CD4-positive, alpha-beta memory T cell (primary cell): ENCODE measurements at regions of chr19 and their contacts with region 1.

Region 1: GRCh38 chr19:18588611-18589379 is at the start of gene REX1BD:
- DNase-seq: peak; percentile 86 to 95 (median 87)
- H3K4me3 ChIP-seq: peak within 1 kb of the TSS; percentile 47 to 79
- H3K4me3 Mint-ChIP-seq: peak within 1 kb of the TSS; percentile 82 to 93 (median 89)
- H3K27ac ChIP-seq: peak within 1 kb of the TSS; percentile 67
- H3K27ac Mint-ChIP-seq: peak within 1 kb of the TSS; percentile 83 to 96 (median 92)
- H3K4me1 ChIP-seq: peaks cover 36% of the 10 kb centered on the region
- H3K4me1 Mint-ChIP-seq: peaks cover 21 to 48% (median 35%) of the 10 kb centered on the region in 4 donors
- H3K27me3 ChIP-seq: no peaks in the 10 kb centered on the region
- H3K27me3 Mint-ChIP-seq: no peaks in the 10 kb centered on the region
- total RNA-seq, gene REX1BD: 150 to 154 TPM

Region 2: DNA sequence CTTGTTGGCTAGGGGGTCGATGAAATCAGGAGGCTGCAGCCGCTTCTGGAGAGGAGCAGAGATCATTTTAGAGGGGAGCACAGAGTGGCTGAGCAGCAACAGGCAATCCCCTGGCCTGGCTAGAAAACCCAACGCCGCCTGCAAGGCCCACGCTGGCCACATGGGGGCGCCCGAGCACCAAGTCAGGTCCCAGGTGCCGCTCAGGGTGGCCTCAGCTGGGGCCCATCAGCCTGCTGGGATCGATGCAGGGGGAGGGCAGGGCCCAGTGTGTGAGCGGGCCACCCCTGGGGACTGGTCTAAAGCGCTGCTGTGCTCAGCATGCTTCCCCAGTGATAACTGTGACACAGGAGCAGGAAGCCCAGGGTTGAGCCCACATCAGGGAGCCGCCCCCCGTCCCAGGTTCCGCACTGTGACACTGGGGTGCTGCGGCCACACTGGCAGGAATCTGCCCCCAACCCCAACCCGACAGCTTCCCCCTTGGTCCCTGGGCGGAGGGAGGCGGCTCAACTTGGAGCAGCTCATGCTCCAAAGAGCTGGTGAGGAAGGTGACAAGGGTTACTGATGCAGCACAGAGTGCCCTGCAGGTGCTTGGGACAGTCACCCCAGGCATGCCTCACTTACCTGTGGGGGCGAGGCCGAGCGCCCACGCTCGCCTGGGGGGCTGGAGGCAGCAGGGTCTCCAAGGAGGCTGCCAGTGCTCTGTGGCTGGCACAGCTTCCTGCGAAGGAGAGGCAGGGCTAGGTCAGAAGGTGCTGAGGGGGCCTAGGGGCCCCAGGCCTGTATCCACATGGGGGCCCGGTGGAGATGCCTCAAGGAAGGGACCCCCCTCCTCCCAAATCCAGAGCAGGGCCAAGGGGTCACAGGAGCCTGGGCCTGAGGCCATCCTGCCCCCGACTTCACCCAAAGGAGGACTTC is 137.6 kb before region 1 on chr19:
- CTCF ChIA-PET with region 1: interaction called, 16 read pairs
- POLR2A ChIA-PET with region 1: interaction called, 5 read pairs
- intact Hi-C with region 1: no loop called
- DNase-seq: peak; percentile 80 to 87 (median 82)
- H3K4me3 ChIP-seq: no peak overlapping the region
- H3K4me3 Mint-ChIP-seq: peak overlapping the region in 1 of 8 donors; percentile 35
- H3K27ac ChIP-seq: no peak overlapping the region
- H3K27ac Mint-ChIP-seq: peak overlapping the region in 5 of 7 donors; percentile 22 to 77 (median 70)
- H3K4me1 ChIP-seq: peaks cover 5% of the 10 kb centered on the region
- H3K4me1 Mint-ChIP-seq: peaks cover 3 to 19% (median 7%) of the 10 kb centered on the region in 4 donors
- H3K27me3 ChIP-seq: no peaks in the 10 kb centered on the region
- H3K27me3 Mint-ChIP-seq: no peaks in the 10 kb centered on the region

Region 3: GRCh38 chr19:18478569-18479311 is 110.1 kb before region 1 on chr19:
- CTCF ChIA-PET with region 1: interaction called, 18 read pairs
- POLR2A ChIA-PET with region 1: interaction called, 21 read pairs
- intact Hi-C with region 1: loop called (anchors 5 kb)
- DNase-seq: peak in 3 of 5 donors; percentile 25 to 78 (median 33)
- H3K4me3 ChIP-seq: no peak overlapping the region
- H3K4me3 Mint-ChIP-seq: peak overlapping the region; percentile 53 to 80 (median 71)
- H3K27ac ChIP-seq: peak overlapping the region; percentile 63
- H3K27ac Mint-ChIP-seq: peak overlapping the region; percentile 89 to 95 (median 94)
- H3K4me1 ChIP-seq: peaks cover 88% of the 10 kb centered on the region
- H3K4me1 Mint-ChIP-seq: peaks cover 54 to 96% (median 78%) of the 10 kb centered on the region in 4 donors
- H3K27me3 ChIP-seq: no peaks in the 10 kb centered on the region
- H3K27me3 Mint-ChIP-seq: no peaks in the 10 kb centered on the region

Region 4: DNA sequence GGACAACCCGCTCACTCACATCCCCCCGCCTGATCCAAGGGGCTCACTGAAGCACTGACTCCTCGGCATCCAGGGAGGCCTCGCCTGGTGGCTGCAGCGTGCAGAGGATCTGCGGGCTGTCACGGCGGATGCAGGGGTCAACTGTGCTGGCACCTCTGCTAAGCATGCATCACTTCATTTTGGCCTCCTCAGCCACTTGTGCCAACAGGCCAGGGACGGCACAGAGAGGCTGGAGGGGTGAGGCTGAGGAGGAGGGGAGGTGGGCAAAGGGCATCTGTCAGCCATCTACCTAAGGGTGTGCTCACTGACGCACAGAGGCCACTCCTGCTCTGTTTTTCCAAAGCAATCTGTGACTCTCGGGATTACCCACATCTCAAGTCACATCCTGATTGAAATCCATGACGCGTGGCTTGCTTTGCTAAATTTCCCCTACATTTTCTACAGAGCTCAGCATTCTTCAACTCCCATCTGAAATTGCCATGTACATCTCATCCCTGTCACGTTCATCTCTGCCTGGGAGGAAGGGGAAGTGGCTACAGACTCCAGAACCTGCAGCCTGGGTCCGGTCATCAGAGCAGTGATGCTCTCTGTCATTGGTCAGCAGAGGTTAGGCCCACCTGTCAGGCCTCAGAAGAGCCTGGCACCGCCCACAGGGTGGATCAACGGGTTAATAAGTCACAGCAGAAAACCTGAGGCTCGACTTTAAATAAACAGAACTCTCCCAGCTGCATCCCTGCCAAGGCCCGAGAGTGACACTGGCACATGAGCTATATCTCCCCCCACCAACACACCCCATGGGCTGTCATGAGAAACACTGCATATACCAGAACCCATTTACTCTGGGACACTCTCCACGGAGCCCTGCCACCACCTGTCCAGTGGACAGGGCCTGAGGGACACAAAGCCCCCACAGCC is 84.6 kb before region 1 on chr19:
- CTCF ChIA-PET with region 1: interaction called, 11 read pairs
- POLR2A ChIA-PET with region 1: interaction called, 4 read pairs
- intact Hi-C with region 1: no loop called
- DNase-seq: no peak
- H3K4me3 ChIP-seq: no peak overlapping the region
- H3K4me3 Mint-ChIP-seq: peak overlapping the region in 6 of 8 donors; percentile 13 to 88 (median 60)
- H3K27ac ChIP-seq: peak overlapping the region; percentile 56
- H3K27ac Mint-ChIP-seq: peak overlapping the region; percentile 55 to 97 (median 80)
- H3K4me1 ChIP-seq: peaks cover 100% of the 10 kb centered on the region
- H3K4me1 Mint-ChIP-seq: peaks cover 70 to 100% (median 88%) of the 10 kb centered on the region in 4 donors
- H3K27me3 ChIP-seq: no peaks in the 10 kb centered on the region
- H3K27me3 Mint-ChIP-seq: no peaks in the 10 kb centered on the region

Region 5: DNA sequence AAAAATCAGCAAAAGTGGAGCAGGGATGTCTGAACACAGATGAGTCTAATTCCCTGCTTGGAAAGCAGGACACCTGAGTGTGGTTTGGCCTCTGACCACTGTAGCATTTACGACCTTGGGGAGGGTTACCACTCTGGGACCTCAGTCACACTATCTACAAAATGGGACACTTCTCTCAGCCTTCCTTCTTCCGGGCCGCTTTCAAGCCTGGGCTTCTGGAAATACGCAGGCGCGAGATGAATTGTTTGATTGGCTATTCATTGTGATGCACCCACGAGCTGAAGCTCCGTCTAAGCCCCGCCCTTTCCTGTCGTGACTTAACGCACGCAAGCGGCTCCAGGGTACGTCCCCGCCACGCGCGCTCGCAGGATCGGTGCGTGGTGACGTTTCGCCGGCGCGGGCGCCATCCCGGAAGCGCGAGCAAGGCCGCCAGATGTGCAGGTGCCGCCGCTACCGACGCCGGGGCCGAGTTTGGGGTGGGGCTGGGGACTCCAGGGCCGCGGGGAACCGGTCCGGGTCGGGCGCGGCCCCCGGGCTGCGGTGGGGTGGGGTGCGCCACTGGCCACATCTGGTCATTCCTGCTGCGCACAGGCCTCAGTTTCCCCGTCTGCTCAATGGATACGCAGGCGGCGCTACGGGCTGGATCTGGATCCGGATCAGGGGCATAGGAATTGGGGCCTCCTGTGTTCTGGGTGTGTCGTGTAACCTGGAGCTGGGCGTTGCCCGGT is 31.2 kb before region 1 on chr19 and contains the start of gene KXD1:
- CTCF ChIA-PET with region 1: interaction called, 26 read pairs
- POLR2A ChIA-PET with region 1: interaction called, 56 read pairs
- intact Hi-C with region 1: no loop called
- DNase-seq: peak; percentile 95 to 100 (median 99)
- H3K4me3 ChIP-seq: peak within 1 kb of the TSS; percentile 81 to 97
- H3K4me3 Mint-ChIP-seq: peak within 1 kb of the TSS; percentile 86 to 97 (median 93)
- H3K27ac ChIP-seq: peak within 1 kb of the TSS; percentile 98
- H3K27ac Mint-ChIP-seq: peak within 1 kb of the TSS; percentile 94 to 98 (median 96)
- H3K4me1 ChIP-seq: peaks cover 25% of the 10 kb centered on the region
- H3K4me1 Mint-ChIP-seq: peaks cover 9 to 35% (median 17%) of the 10 kb centered on the region in 4 donors
- H3K27me3 ChIP-seq: no peaks in the 10 kb centered on the region
- H3K27me3 Mint-ChIP-seq: no peaks in the 10 kb centered on the region
- total RNA-seq, gene KXD1: 95.3 to 95.6 TPM

Region 6: GRCh38 chr19:18636183-18636968 is 47.6 kb after region 1 on chr19:
- CTCF ChIA-PET with region 1: no interaction called
- POLR2A ChIA-PET with region 1: interaction called, 6 read pairs
- intact Hi-C with region 1: loop called (anchors 1 kb)
- DNase-seq: peak; percentile 97 to 99 (median 99)
- H3K4me3 ChIP-seq: peak overlapping the region; percentile 47 to 82
- H3K4me3 Mint-ChIP-seq: peak overlapping the region; percentile 84 to 90 (median 88)
- H3K27ac ChIP-seq: peak overlapping the region; percentile 84
- H3K27ac Mint-ChIP-seq: peak overlapping the region; percentile 77 to 96 (median 94)
- H3K4me1 ChIP-seq: peaks cover 24% of the 10 kb centered on the region
- H3K4me1 Mint-ChIP-seq: peaks cover 20 to 45% (median 33%) of the 10 kb centered on the region in 4 donors
- H3K27me3 ChIP-seq: no peaks in the 10 kb centered on the region
- H3K27me3 Mint-ChIP-seq: peaks cover 0 to 2% of the 10 kb centered on the region in 2 donors

Region 7: GRCh38 chr19:18846862-18847548 is 258.2 kb after region 1 on chr19:
- CTCF ChIA-PET with region 1: interaction called, 31 read pairs
- POLR2A ChIA-PET with region 1: interaction called, 7 read pairs
- intact Hi-C with region 1: no loop called
- DNase-seq: peak; percentile 58 to 64 (median 62)
- H3K4me3 ChIP-seq: no peak overlapping the region
- H3K4me3 Mint-ChIP-seq: peak overlapping the region in 5 of 8 donors; percentile 17 to 70 (median 39)
- H3K27ac ChIP-seq: no peak overlapping the region
- H3K27ac Mint-ChIP-seq: peak overlapping the region; percentile 42 to 89 (median 63)
- H3K4me1 ChIP-seq: peaks cover 66% of the 10 kb centered on the region
- H3K4me1 Mint-ChIP-seq: peaks cover 47 to 80% (median 63%) of the 10 kb centered on the region in 4 donors
- H3K27me3 ChIP-seq: no peaks in the 10 kb centered on the region
- H3K27me3 Mint-ChIP-seq: no peaks in the 10 kb centered on the region